ENCODE measurements at regions of chr19 and their contacts with region 1.

Region 1: DNA sequence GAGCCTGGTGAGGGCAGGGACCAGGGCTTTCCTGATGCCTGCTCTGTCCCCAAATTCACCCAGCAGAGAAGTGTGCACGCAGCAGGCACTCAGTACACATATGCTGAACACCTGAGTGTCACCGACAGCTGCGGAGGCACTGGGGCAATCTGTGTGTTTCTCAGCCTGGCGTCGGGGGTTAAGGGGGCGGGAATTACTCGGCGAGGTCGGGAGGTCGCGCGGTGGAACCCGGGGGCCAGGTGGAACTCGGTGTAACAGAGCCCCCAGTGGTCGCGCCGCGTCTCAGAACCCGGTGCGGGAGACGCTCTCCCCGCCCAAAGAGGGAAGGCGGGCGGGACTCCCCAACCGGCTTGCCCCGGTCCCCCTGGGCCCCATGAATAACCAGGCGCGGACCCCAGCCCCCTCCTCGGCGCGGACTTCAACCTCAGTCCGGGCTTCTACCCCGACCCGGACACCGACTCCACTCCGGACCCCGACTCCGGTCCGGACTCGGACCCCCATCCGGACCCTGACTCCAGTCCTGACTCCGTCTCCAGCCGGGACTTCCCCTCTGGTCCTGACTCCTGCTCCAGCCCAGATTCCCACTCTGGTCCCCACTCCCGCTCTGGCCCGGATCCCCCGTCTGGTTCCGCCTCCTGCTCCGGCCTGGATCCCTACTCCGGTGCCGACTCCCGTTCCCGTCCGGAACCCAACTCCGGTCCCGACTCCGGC is at the start of gene SELENOV:
- DNase-seq: no peak
- CTCF ChIP-seq: no peak

Region 2: GRCh38 chr19:39502640-39503417 is 12.2 kb before region 1 on chr19:
- CTCF ChIA-PET with region 1: interaction called, 24 read pairs
- POLR2A ChIA-PET with region 1: no interaction called
- DNase-seq: peak; percentile 87
- CTCF ChIP-seq: peak; percentile 87